Activated CD8-positive, alpha-beta T cell treated with anti-CD3 and anti-CD28 coated beads, Interleukin-2, amount 10 ng/mL, durations not matched to agents 7 days and 5 days (primary cell): ENCODE measurements at regions of chr6 and their contacts with region 1.

Region 1: DNA sequence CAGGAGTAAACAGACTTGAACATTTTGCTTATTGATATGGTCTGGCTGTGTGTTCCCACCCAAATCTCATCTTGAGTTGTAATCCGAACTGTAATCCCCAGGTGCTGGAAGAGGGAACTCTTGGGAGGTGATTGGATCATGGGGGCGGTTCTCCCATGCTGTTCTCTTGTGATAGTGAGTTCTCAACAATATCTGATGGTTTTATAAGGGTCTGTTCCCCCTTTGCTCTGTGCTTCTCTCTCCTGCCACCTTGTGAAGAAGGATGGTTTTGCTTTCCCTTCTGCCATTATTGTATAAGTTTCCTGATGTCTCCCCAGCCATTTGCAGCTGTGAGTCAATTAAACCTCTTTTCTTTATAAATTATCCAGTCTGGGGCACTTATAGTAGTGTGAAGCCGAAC is 40.0 kb downstream of the MYLIP start:
- DNase-seq: peak; percentile 39
- ATAC-seq: peak; percentile 79
- H3K4me3 Mint-ChIP-seq: no peak overlapping the region
- H3K27ac Mint-ChIP-seq: peak overlapping the region; percentile 37
- H3K4me1 Mint-ChIP-seq: peaks cover 25% of the 10 kb centered on the region
- H3K27me3 Mint-ChIP-seq: peaks cover 16% of the 10 kb centered on the region

Region 2: DNA sequence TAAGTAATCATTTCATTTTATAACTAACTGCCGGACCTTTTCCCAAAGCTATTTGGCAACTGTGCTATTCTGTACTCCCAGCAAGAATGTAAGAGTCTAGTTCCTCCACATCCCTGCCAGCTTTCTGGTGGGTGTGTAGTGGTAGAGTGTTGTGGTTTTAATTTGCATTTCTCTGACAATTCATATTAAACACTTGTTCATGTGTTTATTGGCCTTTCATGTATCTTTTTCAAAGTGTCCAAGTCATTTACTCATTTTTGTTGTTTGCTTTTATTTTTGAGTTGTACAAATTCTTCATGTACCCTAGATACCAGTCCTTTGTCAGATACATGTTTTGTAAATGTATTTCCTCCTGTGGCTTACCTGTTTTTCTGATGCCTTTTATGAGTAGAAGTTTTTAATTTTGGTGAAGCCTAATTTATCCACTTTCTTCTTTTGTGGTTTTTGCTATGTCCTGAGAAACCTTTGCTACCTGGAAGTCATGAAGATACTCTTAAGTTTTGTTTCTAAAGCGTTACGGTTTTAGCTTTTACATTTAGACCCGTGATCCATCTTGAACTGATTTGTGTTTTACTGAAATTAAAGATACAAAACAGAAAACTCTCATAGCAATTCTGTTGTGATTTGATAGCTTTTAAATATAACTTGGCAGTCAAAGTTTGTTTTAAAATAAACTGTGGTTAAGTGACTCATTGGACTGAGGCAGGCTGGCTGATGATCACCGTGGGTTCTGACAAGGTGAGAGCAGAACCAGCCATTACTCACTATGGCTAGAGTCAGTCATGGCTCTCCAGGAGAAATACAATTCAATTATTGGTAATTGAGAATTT is 32.0 kb before region 1 on chr6:
- CTCF ChIA-PET with region 1: interaction called, 11 read pairs
- POLR2A ChIA-PET with region 1: no interaction called
- DNase-seq: peak; percentile 55
- ATAC-seq: peak; percentile 75
- H3K4me3 Mint-ChIP-seq: peak overlapping the region; percentile 65
- H3K27ac Mint-ChIP-seq: peak overlapping the region; percentile 86
- H3K4me1 Mint-ChIP-seq: peaks cover 66% of the 10 kb centered on the region
- H3K27me3 Mint-ChIP-seq: no peaks in the 10 kb centered on the region

Region 3: GRCh38 chr6:16257999-16258708 is 89.3 kb after region 1 on chr6:
- CTCF ChIA-PET with region 1: no interaction called
- POLR2A ChIA-PET with region 1: no interaction called
- DNase-seq: no peak
- ATAC-seq: no peak
- H3K4me3 Mint-ChIP-seq: no peak overlapping the region
- H3K27ac Mint-ChIP-seq: no peak overlapping the region
- H3K4me1 Mint-ChIP-seq: no peaks in the 10 kb centered on the region
- H3K27me3 Mint-ChIP-seq: no peaks in the 10 kb centered on the region